ENCODE measurements at regions of chr5 and their contacts with region 1.

Region 1: DNA sequence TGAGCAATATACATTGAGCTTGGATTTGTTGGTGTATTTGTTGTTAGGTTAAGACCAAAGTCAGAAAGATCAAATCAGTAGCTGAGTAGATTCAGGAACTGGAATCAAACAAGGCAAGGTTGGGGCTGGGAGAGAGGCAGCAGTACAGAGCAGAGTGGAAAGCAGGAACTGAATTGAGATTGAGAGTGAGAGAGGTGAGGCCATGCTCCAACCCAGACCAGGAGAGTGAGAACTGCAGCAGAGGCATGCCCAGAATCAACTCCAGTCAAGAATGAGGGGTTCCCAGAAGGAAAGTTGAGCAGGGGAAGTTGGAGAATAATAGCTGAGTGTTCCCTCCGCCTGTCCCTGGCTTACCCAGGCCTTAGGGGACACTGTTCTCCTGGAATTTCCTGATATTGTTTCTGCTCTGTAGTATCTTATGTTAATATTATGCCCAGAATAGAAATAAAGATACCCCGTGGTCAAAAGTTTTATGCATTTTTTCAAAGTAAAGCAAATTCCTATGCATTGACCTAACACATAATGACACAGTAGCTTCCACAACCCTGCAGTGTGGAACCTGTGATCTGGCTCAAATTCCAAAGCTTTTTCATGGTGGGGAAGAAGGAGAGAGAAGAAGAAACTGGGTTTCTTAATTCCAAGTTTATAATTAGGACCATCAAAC is 82.7 kb downstream of the SV2C start:
- DNase-seq: no peak
- H3K4me3 Mint-ChIP-seq: no peak overlapping the region
- H3K27ac Mint-ChIP-seq: no peak overlapping the region
- H3K4me1 Mint-ChIP-seq: peaks cover 12% of the 10 kb centered on the region
- H3K27me3 Mint-ChIP-seq: peaks cover 5% of the 10 kb centered on the region

Region 2: DNA sequence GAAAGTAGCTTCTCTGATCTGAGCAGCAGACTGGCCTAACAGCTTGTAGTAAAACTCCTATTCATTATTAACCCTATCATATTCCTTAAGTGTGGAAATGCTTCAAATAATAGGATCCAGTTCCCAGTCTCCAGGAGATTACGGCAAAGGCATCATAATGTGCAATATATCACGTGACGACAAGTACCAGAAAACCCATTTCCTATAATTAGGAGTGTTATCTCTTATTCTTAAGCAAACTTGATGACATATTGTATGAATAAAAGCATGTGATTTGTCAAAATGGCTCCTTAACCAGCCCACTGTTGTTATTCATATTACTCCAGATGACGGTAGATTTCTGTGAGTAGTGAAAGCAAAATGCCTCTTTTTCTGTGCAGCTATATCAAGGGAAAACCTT is 79.7 kb before region 1 on chr5:
- CTCF ChIA-PET with region 1: no interaction called
- POLR2A ChIA-PET with region 1: no interaction called
- intact Hi-C with region 1: no loop called
- DNase-seq: no peak
- H3K4me3 Mint-ChIP-seq: no peak overlapping the region
- H3K27ac Mint-ChIP-seq: no peak overlapping the region
- H3K4me1 Mint-ChIP-seq: peaks cover 28% of the 10 kb centered on the region
- H3K27me3 Mint-ChIP-seq: peaks cover 50% of the 10 kb centered on the region

Region 3: GRCh38 chr5:76180814-76181805 is 15.3 kb after region 1 on chr5:
- CTCF ChIA-PET with region 1: interaction called, 50 read pairs
- POLR2A ChIA-PET with region 1: interaction called, 10 read pairs
- intact Hi-C with region 1: loop called (anchors 1 kb)
- DNase-seq: peak; percentile 47
- H3K4me3 Mint-ChIP-seq: no peak overlapping the region
- H3K27ac Mint-ChIP-seq: no peak overlapping the region
- H3K4me1 Mint-ChIP-seq: peaks cover 23% of the 10 kb centered on the region
- H3K27me3 Mint-ChIP-seq: no peaks in the 10 kb centered on the region

Region 4: GRCh38 chr5:76433261-76433660 is 267.4 kb after region 1 on chr5:
- CTCF ChIA-PET with region 1: no interaction called
- POLR2A ChIA-PET with region 1: no interaction called
- intact Hi-C with region 1: no loop called
- DNase-seq: no peak
- H3K4me3 Mint-ChIP-seq: no peak overlapping the region
- H3K27ac Mint-ChIP-seq: no peak overlapping the region
- H3K4me1 Mint-ChIP-seq: peaks cover 25% of the 10 kb centered on the region
- H3K27me3 Mint-ChIP-seq: no peaks in the 10 kb centered on the region

Region 5: GRCh38 chr5:76483433-76483832 is 317.6 kb after region 1 on chr5:
- CTCF ChIA-PET with region 1: no interaction called
- POLR2A ChIA-PET with region 1: no interaction called
- intact Hi-C with region 1: no loop called
- DNase-seq: no peak
- H3K4me3 Mint-ChIP-seq: no peak overlapping the region
- H3K27ac Mint-ChIP-seq: no peak overlapping the region
- H3K4me1 Mint-ChIP-seq: peaks cover 57% of the 10 kb centered on the region
- H3K27me3 Mint-ChIP-seq: no peaks in the 10 kb centered on the region

Region 6: GRCh38 chr5:77066823-77067442 is 901.1 kb after region 1 on chr5:
- CTCF ChIA-PET with region 1: no interaction called
- POLR2A ChIA-PET with region 1: no interaction called
- intact Hi-C with region 1: no loop called
- DNase-seq: no peak
- H3K4me3 Mint-ChIP-seq: no peak overlapping the region
- H3K27ac Mint-ChIP-seq: no peak overlapping the region
- H3K4me1 Mint-ChIP-seq: peaks cover 2% of the 10 kb centered on the region
- H3K27me3 Mint-ChIP-seq: no peaks in the 10 kb centered on the region